T-cell (primary cell): ENCODE measurements at regions of chr22 and their contacts with region 1.

Region 1: GRCh38 chr22:30289134-30289979 is at the start of gene CASTOR1:
- DNase-seq: peak; percentile 66 to 92 (median 78)
- ATAC-seq: peak; percentile 78 to 84 (median 81)
- H3K4me3 ChIP-seq: peak within 1 kb of the TSS; percentile 66 to 74
- H3K4me3 Mint-ChIP-seq: peak within 1 kb of the TSS; percentile 82 to 89 (median 86)
- H3K27ac ChIP-seq: peak within 1 kb of the TSS; percentile 61
- H3K27ac Mint-ChIP-seq: peak within 1 kb of the TSS; percentile 92 to 93
- H3K4me1 ChIP-seq: peaks cover 16 to 50% of the 10 kb centered on the region in 2 experiments
- H3K4me1 Mint-ChIP-seq: peaks cover 38 to 52% (median 45%) of the 10 kb centered on the region in 3 donors
- H3K27me3 ChIP-seq: no peaks in the 10 kb centered on the region
- H3K27me3 Mint-ChIP-seq: no peaks in the 10 kb centered on the region
- total RNA-seq, gene CASTOR1: 12.8 to 21.9 (median 16.1) TPM

Region 2: DNA sequence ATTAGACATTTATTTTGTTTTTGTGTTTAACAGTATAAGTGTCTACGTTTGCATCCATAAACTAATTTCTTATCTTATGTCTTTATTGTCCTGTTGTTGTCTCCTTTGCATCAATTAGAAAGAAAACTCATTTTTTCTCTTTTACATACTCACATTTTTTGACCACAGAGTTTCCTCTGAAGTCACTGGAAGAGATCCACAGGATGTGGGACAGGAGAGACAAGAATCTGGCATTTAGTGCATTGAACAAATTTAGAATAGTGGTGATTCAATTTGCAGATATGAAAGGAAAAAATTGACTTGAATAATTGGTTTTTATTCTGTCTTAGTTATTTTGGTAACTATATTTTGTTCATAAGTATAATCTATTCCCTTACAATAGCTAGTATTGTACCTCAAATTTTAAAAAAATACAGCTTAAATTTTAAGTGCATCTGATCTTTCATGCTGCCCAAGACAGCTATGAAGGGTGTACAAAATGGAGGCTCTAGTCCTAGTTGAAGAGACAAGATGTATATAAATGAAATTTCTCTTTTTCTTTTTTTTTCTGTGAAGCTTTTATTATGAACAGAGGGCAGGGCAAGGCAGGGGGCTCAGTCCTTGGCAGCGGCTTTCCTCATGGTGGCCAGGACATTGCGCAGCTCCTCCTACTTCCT is 184.7 kb before region 1 on chr22:
- CTCF ChIA-PET with region 1: interaction called in 1 of 2 experiments, 23 read pairs
- POLR2A ChIA-PET with region 1: interaction called in 1 of 2 experiments, 3 read pairs
- DNase-seq: peak in 1 of 35 experiments; percentile 35
- ATAC-seq: peak; percentile 50 to 85 (median 71)
- H3K4me3 ChIP-seq: no peak overlapping the region
- H3K4me3 Mint-ChIP-seq: peak overlapping the region in 1 of 3 donors; percentile 25
- H3K27ac ChIP-seq: no peak overlapping the region
- H3K27ac Mint-ChIP-seq: peak overlapping the region in 1 of 2 donors; percentile 65
- H3K4me1 ChIP-seq: peaks cover 9 to 12% of the 10 kb centered on the region in 2 experiments
- H3K4me1 Mint-ChIP-seq: peaks cover 32 to 43% (median 39%) of the 10 kb centered on the region in 3 donors
- H3K27me3 ChIP-seq: no peaks in the 10 kb centered on the region
- H3K27me3 Mint-ChIP-seq: no peaks in the 10 kb centered on the region

Region 3: DNA sequence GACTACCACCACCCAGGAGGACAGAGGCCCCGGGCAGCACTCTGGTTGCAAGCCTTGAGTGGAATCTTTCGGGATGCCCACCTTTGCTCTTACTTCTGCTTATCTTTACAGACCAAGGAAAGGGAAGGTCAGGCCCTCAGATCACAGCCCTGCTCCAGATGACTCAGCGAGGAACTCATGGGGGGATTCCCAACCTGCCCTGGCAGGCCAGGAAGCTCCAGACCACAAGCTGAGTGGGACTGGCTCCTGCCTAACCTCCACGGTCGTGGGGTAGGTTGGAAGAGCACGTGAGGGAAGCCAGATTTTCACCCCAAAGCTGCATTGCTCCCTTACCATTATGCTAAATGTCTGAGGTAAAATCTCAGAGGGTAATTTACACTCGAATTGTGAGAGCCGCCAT is 25.6 kb after region 1 on chr22:
- CTCF ChIA-PET with region 1: interaction called, 3 to 15 read pairs
- POLR2A ChIA-PET with region 1: no interaction called
- DNase-seq: peak in 10 of 35 experiments; percentile 17 to 70 (median 32)
- ATAC-seq: peak in 3 of 4 experiments; percentile 46 to 70 (median 49)
- H3K4me3 ChIP-seq: no peak overlapping the region
- H3K4me3 Mint-ChIP-seq: peak overlapping the region in 2 of 3 donors; percentile 29 to 73
- H3K27ac ChIP-seq: peak overlapping the region; percentile 52
- H3K27ac Mint-ChIP-seq: peak overlapping the region; percentile 91
- H3K4me1 ChIP-seq: peaks cover 76 to 99% of the 10 kb centered on the region in 2 experiments
- H3K4me1 Mint-ChIP-seq: peaks cover 97 to 98% (median 98%) of the 10 kb centered on the region in 3 donors
- H3K27me3 ChIP-seq: no peaks in the 10 kb centered on the region
- H3K27me3 Mint-ChIP-seq: no peaks in the 10 kb centered on the region

Region 4: DNA sequence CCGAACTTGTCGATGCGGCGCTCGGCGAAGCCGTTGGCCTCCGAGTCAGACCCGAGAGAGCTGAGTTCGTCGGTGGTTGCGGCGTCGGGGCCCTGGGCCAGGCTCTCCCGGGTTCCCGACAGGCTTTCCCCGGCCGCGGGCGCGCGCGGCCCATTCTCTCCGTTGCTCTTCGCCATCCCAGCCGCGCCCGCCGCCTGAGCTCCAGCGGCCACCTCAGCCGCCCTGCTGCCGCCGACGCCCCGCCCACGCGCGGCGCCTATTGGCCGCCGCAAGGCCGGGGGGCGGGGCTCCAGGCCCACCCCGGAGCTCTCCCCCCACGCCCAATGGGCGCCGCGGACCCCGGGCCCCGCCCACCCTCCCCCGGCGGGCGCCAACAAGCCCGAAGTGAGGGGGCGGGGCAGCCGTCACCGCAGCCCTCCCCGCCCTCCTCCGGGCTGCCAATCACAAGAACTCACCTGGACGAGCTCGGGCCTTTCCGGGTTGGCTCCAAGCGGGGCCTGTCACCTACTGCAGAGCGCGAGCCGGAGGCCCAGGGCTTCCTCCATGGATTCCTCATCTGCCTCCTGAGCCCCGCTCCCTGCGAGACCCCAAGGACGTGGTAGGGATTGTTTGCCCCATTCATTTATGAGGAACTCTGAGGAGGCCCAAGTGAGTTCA is 37.5 kb after region 1 on chr22 and contains the start of gene TBC1D10A:
- CTCF ChIA-PET with region 1: interaction called, 8 to 37 read pairs
- POLR2A ChIA-PET with region 1: no interaction called
- DNase-seq: peak; percentile 86 to 97 (median 92)
- ATAC-seq: peak; percentile 88 to 94 (median 90)
- H3K4me3 ChIP-seq: peak within 1 kb of the TSS; percentile 70 to 96
- H3K4me3 Mint-ChIP-seq: peak within 1 kb of the TSS; percentile 82 to 91 (median 87)
- H3K27ac ChIP-seq: peak within 1 kb of the TSS; percentile 77
- H3K27ac Mint-ChIP-seq: peak within 1 kb of the TSS; percentile 91
- H3K4me1 ChIP-seq: peaks cover 28 to 53% of the 10 kb centered on the region in 2 experiments
- H3K4me1 Mint-ChIP-seq: peaks cover 45 to 54% (median 52%) of the 10 kb centered on the region in 3 donors
- H3K27me3 ChIP-seq: no peaks in the 10 kb centered on the region
- H3K27me3 Mint-ChIP-seq: no peaks in the 10 kb centered on the region
- total RNA-seq, gene TBC1D10A: 56.2 to 84.3 (median 82.3) TPM

Region 5: GRCh38 chr22:30356449-30357235 is 67.3 kb after region 1 on chr22 and contains the starts of genes CCDC157 and SF3A1:
- CTCF ChIA-PET with region 1: interaction called, 3 to 12 read pairs
- POLR2A ChIA-PET with region 1: interaction called, 3 read pairs
- DNase-seq: peak; percentile 69 to 94 (median 84)
- ATAC-seq: peak; percentile 88 to 93 (median 92)
- H3K4me3 ChIP-seq: peak within 1 kb of the TSS; percentile 79 to 97
- H3K4me3 Mint-ChIP-seq: peak within 1 kb of the TSS; percentile 92 to 96 (median 95)
- H3K27ac ChIP-seq: peak within 1 kb of the TSS; percentile 87
- H3K27ac Mint-ChIP-seq: peak within 1 kb of the TSS; percentile 87 to 92
- H3K4me1 ChIP-seq: peaks cover 15 to 55% of the 10 kb centered on the region in 2 experiments
- H3K4me1 Mint-ChIP-seq: peaks cover 51 to 55% (median 54%) of the 10 kb centered on the region in 3 donors
- H3K27me3 ChIP-seq: peaks cover 0 to 3% of the 10 kb centered on the region in 2 experiments
- H3K27me3 Mint-ChIP-seq: peaks cover 0 to 2% of the 10 kb centered on the region in 2 donors
- total RNA-seq, gene CCDC157: 4.6 to 10.9 (median 5.1) TPM
- total RNA-seq, gene SF3A1: 272 to 323 (median 292) TPM

Region 6: GRCh38 chr22:30386960-30387827 is 97.8 kb after region 1 on chr22 and contains the start of gene RNF215:
- CTCF ChIA-PET with region 1: interaction called, 23 to 83 read pairs
- POLR2A ChIA-PET with region 1: interaction called in 1 of 2 experiments, 6 read pairs
- DNase-seq: peak; percentile 41 to 91 (median 68)
- ATAC-seq: peak; percentile 85 to 89 (median 86)
- H3K4me3 ChIP-seq: peak within 1 kb of the TSS; percentile 35 to 53
- H3K4me3 Mint-ChIP-seq: peak within 1 kb of the TSS; percentile 66 to 77 (median 73)
- H3K27ac ChIP-seq: no peak within 1 kb of the TSS
- H3K27ac Mint-ChIP-seq: peak within 1 kb of the TSS; percentile 49 to 68
- H3K4me1 ChIP-seq: peaks cover 3 to 22% of the 10 kb centered on the region in 2 experiments
- H3K4me1 Mint-ChIP-seq: peaks cover 15 to 24% (median 20%) of the 10 kb centered on the region in 3 donors
- H3K27me3 ChIP-seq: peaks cover 0 to 4% of the 10 kb centered on the region in 2 experiments
- H3K27me3 Mint-ChIP-seq: no peaks in the 10 kb centered on the region
- total RNA-seq, gene RNF215: 6.2 to 8.4 (median 6.3) TPM

Region 7: GRCh38 chr22:30396871-30397655 is 107.7 kb after region 1 on chr22 and contains the start of gene SEC14L2:
- CTCF ChIA-PET with region 1: interaction called, 3 to 18 read pairs
- POLR2A ChIA-PET with region 1: no interaction called
- DNase-seq: peak; percentile 22 to 72 (median 49)
- ATAC-seq: peak; percentile 65 to 82 (median 78)
- H3K4me3 ChIP-seq: peak within 1 kb of the TSS; percentile 67 to 70
- H3K4me3 Mint-ChIP-seq: peak within 1 kb of the TSS; percentile 83 to 87 (median 86)
- H3K27ac ChIP-seq: peak within 1 kb of the TSS; percentile 34
- H3K27ac Mint-ChIP-seq: peak within 1 kb of the TSS; percentile 84 to 87
- H3K4me1 ChIP-seq: peaks cover 23 to 50% of the 10 kb centered on the region in 2 experiments
- H3K4me1 Mint-ChIP-seq: peaks cover 43 to 48% (median 44%) of the 10 kb centered on the region in 3 donors
- H3K27me3 ChIP-seq: peaks cover 0 to 48% of the 10 kb centered on the region in 2 experiments
- H3K27me3 Mint-ChIP-seq: peaks cover 0 to 7% of the 10 kb centered on the region in 2 donors
- total RNA-seq, gene SEC14L2: 10.9 to 87.9 (median 15.8) TPM